AG04450 (cell line): ENCODE measurements at regions of chr9 and their contacts with region 1.

Region 1: GRCh38 chr9:100426530-100427428 is at the start of gene MSANTD3:
- DNase-seq: no peak
- H3K4me3 ChIP-seq: peak within 1 kb of the TSS; percentile 79
- H3K27ac ChIP-seq: peak within 1 kb of the TSS; percentile 100
- H3K27me3 ChIP-seq: no peaks in the 10 kb centered on the region
- CTCF ChIP-seq: no peak
- polyA plus RNA-seq, gene MSANTD3: 53.6 and 63.1 TPM in 2 replicates

Region 2: DNA sequence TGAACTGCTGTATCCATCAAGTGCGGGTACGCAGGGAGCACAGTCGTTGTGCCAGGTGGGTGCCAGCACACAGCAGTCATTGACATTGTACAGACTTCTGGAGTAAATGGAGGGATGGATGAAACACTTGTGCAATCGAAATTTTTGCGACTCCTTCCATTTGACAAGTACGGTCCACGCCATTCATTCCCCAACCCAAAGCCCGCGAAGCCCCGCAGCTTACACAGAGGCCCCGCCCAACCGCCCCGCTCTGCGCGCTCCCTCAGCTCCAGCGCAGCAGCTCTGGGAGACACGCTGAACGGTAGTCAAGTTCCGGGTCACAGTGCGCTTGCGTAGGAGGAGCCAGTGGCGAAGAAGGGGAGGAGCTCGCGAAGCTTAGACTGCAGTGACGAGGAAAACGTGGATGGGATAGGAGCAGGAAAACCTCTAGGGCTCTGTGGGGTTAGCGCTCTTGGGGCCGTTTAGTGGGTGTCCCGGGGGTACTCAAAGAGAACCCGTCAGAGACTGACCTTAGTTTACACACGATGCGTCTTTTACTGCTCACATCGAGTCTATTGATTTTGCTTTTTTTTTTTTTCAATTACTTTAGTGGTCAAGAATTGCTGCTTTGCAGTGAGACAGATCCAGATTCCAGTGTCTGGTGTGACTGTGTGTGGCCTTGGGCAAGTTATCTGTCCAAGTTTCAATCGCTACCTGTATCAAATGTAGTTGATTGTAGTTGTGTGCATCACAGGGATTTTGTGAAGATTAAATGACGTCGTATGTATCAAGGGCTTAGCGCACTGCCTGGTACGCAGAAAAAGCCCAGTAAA is 15.1 kb before region 1 on chr9:
- CTCF ChIA-PET with region 1: no interaction called
- POLR2A ChIA-PET with region 1: interaction called, 14 read pairs
- DNase-seq: peak; percentile 61
- H3K4me3 ChIP-seq: peak overlapping the region; percentile 65
- H3K27ac ChIP-seq: no peak overlapping the region
- H3K27me3 ChIP-seq: peaks cover 3% of the 10 kb centered on the region
- CTCF ChIP-seq: no peak

Region 3: DNA sequence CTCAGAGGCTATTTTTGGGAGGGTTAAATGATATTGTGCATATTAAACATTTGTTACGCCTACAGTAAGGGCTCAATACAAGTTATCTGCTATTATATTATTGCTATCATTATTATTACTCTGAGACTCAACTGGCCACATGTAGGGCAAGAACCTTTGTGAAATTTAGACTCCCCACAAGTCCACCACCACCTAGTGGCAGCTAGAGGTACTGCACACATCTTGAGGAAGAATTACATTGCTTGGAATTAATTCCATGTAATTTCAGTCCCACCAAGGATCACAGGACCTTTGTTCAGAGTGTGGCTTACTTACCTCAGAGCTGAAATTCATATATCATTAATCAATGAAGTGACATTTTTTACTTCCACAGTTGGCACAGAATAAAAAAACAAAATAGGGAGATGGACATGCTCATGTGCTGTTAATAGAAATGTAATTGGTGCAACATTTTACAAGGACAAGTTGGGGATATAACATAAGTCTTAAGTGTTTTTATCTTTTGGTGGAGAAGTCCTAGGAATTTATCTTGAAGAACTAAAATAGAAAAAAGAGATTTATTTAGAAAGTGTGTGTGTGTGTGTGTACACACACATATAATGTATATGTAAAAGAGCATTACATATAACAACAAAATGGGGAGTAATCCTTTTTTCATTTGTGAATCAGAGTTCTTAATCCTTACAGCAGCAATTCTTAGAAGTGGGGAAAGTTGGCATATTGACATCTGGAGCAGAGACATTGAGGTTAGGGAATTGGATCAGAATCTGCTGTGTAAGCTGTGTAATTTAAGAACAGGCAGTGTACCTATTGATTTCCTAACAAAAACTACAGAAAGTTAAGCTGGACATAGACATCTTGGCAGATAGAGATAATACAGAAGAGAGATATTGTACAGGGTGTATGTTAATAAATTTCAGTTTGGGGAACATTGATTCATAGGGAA is 11.4 kb after region 1 on chr9:
- CTCF ChIA-PET with region 1: interaction called, 13 read pairs
- POLR2A ChIA-PET with region 1: no interaction called
- DNase-seq: peak; percentile 57
- H3K4me3 ChIP-seq: no peak overlapping the region
- H3K27ac ChIP-seq: no peak overlapping the region
- H3K27me3 ChIP-seq: no peaks in the 10 kb centered on the region
- CTCF ChIP-seq: peak; percentile 98